ENCODE measurements at regions of chr7 and their contacts with region 1.

Region 1: GRCh38 chr7:114026486-114027089 is 107.8 kb upstream of the PPP1R3A start:
- DNase-seq: no peak
- ATAC-seq: peak; percentile 49
- H3K4me3 Mint-ChIP-seq: no peak overlapping the region
- H3K27ac Mint-ChIP-seq: no peak overlapping the region
- H3K4me1 Mint-ChIP-seq: no peaks in the 10 kb centered on the region
- H3K27me3 Mint-ChIP-seq: no peaks in the 10 kb centered on the region
- CTCF ChIP-seq: no peak

Region 2: DNA sequence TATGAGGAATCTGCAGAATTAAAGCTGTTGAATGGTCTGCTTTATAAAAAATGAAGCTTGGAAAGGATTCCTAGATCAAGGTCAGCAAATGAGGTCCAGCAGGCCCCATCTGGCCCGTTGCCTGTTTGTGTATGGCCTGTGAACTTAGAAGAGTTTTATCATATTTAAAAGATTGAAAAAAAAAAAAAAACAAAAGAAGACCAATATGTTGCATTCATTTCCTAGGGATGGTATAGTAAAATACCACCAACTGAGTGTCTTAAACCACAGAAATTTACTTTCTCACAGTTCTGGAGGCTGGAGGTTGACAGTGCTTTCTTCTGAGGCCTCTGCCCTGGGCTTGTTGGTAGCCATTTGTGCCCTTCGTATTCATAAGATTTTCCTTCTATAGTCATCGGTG is 217.0 kb before region 1 on chr7:
- CTCF ChIA-PET with region 1: no interaction called
- POLR2A ChIA-PET with region 1: no interaction called
- intact Hi-C with region 1: no loop called
- DNase-seq: no peak
- ATAC-seq: no peak
- H3K4me3 Mint-ChIP-seq: no peak overlapping the region
- H3K27ac Mint-ChIP-seq: no peak overlapping the region
- H3K4me1 Mint-ChIP-seq: no peaks in the 10 kb centered on the region
- H3K27me3 Mint-ChIP-seq: no peaks in the 10 kb centered on the region
- CTCF ChIP-seq: no peak

Region 3: GRCh38 chr7:113986209-113986608 is 40.4 kb before region 1 on chr7:
- CTCF ChIA-PET with region 1: no interaction called
- POLR2A ChIA-PET with region 1: no interaction called
- intact Hi-C with region 1: no loop called
- DNase-seq: no peak
- ATAC-seq: no peak
- H3K4me3 Mint-ChIP-seq: no peak overlapping the region
- H3K27ac Mint-ChIP-seq: no peak overlapping the region
- H3K4me1 Mint-ChIP-seq: no peaks in the 10 kb centered on the region
- H3K27me3 Mint-ChIP-seq: no peaks in the 10 kb centered on the region
- CTCF ChIP-seq: no peak

Region 4: GRCh38 chr7:114070244-114070643 is 43.7 kb after region 1 on chr7:
- CTCF ChIA-PET with region 1: no interaction called
- POLR2A ChIA-PET with region 1: no interaction called
- intact Hi-C with region 1: no loop called
- DNase-seq: no peak
- ATAC-seq: no peak
- H3K4me3 Mint-ChIP-seq: no peak overlapping the region
- H3K27ac Mint-ChIP-seq: no peak overlapping the region
- H3K4me1 Mint-ChIP-seq: no peaks in the 10 kb centered on the region
- H3K27me3 Mint-ChIP-seq: peaks cover 7% of the 10 kb centered on the region
- CTCF ChIP-seq: no peak

Region 5: DNA sequence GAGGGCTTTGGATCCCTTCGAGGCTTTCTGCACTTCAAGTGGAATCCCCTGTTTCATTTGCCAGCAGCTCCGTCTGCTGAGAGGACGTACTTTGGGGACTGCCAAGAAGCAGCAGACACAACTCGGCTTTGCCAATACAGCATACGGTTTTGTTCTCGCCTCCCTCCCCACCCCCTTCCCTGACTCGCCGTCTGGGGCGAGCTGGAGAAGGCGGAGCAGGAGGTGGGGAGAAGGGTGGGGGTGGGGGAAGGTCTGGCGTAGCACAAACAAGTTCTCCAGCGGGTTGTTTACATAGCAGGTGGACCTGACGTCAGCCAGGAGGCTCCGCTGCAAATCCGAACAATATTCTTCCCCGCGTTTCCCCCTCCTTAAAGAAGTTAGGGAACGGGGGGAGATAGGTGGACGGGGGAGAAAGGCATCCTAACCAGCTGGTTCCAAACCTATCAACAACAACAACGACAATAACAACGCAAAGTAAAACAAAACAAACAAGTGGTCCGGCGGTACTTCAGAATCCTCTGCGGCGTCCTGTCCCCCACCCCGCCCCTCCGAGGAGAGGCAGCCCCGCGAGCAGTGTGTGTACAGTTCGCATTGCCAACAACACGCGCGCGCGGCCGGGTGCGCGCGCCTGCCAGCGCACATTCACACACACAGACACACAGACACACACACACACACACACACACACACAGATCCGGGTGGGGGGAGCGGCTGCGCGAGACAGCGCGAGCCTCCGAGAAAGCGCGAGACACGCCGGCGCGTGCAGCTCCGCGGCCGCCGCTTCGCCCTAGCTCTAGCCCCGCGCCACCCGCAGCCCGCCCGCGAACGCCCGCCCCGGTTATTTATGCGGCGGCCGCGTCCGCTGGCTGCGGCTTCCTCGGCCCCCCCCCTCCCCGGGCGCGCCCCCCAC is 59.3 kb after region 1 on chr7:
- CTCF ChIA-PET with region 1: no interaction called
- POLR2A ChIA-PET with region 1: no interaction called
- intact Hi-C with region 1: loop called (anchors 2 kb)
- DNase-seq: no peak
- ATAC-seq: peak; percentile 52
- H3K4me3 Mint-ChIP-seq: peak overlapping the region; percentile 89
- H3K27ac Mint-ChIP-seq: no peak overlapping the region
- H3K4me1 Mint-ChIP-seq: peaks cover 53% of the 10 kb centered on the region
- H3K27me3 Mint-ChIP-seq: peaks cover 61% of the 10 kb centered on the region
- CTCF ChIP-seq: no peak

Region 6: DNA sequence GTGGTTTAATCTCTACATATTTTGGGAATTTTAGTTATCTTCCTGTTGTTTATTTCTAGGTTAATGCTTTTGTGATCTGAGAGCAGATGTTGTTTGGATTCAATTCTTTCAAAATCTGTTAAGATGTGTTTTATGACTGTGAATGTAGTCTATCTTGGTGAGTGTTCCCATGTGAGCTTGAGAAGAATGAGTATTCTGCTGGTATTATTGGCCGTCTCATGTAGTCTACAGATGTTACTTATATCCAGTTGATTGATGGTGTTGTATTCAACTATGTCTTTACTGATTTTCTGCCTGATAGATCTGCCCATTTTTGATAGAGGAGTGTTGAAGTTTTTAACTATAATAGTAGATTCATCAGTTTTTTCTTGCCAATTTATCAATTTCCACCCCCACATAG is 246.6 kb after region 1 on chr7:
- CTCF ChIA-PET with region 1: no interaction called
- POLR2A ChIA-PET with region 1: no interaction called
- intact Hi-C with region 1: no loop called
- DNase-seq: no peak
- ATAC-seq: no peak
- H3K4me3 Mint-ChIP-seq: no peak overlapping the region
- H3K27ac Mint-ChIP-seq: no peak overlapping the region
- H3K4me1 Mint-ChIP-seq: no peaks in the 10 kb centered on the region
- H3K27me3 Mint-ChIP-seq: no peaks in the 10 kb centered on the region
- CTCF ChIP-seq: no peak

Region 7: GRCh38 chr7:114405427-114405826 is 378.8 kb after region 1 on chr7:
- CTCF ChIA-PET with region 1: interaction called, 3 read pairs
- POLR2A ChIA-PET with region 1: no interaction called
- intact Hi-C with region 1: loop called (anchors 2 kb)
- DNase-seq: no peak
- ATAC-seq: no peak
- H3K4me3 Mint-ChIP-seq: no peak overlapping the region
- H3K27ac Mint-ChIP-seq: no peak overlapping the region
- H3K4me1 Mint-ChIP-seq: no peaks in the 10 kb centered on the region
- H3K27me3 Mint-ChIP-seq: no peaks in the 10 kb centered on the region
- CTCF ChIP-seq: no peak

Region 8: GRCh38 chr7:115217373-115217772 is 1190.8 kb after region 1 on chr7:
- CTCF ChIA-PET with region 1: interaction called, 3 read pairs
- POLR2A ChIA-PET with region 1: no interaction called
- intact Hi-C with region 1: loop called (anchors 1 kb)
- DNase-seq: no peak
- ATAC-seq: no peak
- H3K4me3 Mint-ChIP-seq: no peak overlapping the region
- H3K27ac Mint-ChIP-seq: no peak overlapping the region
- H3K4me1 Mint-ChIP-seq: no peaks in the 10 kb centered on the region
- H3K27me3 Mint-ChIP-seq: peaks cover 8% of the 10 kb centered on the region
- CTCF ChIP-seq: no peak

Region 9: GRCh38 chr7:115707258-115708012 is 1680.8 kb after region 1 on chr7:
- CTCF ChIA-PET with region 1: no interaction called
- POLR2A ChIA-PET with region 1: no interaction called
- intact Hi-C with region 1: loop called (anchors 2 kb)
- DNase-seq: no peak
- ATAC-seq: no peak
- H3K4me3 Mint-ChIP-seq: no peak overlapping the region
- H3K27ac Mint-ChIP-seq: no peak overlapping the region
- H3K4me1 Mint-ChIP-seq: no peaks in the 10 kb centered on the region
- H3K27me3 Mint-ChIP-seq: no peaks in the 10 kb centered on the region
- CTCF ChIP-seq: no peak

Region 10: GRCh38 chr7:115851291-115851690 is 1824.7 kb after region 1 on chr7:
- CTCF ChIA-PET with region 1: interaction called, 13 read pairs
- POLR2A ChIA-PET with region 1: no interaction called
- intact Hi-C with region 1: loop called (anchors 1 kb)
- DNase-seq: no peak
- ATAC-seq: no peak
- H3K4me3 Mint-ChIP-seq: no peak overlapping the region
- H3K27ac Mint-ChIP-seq: no peak overlapping the region
- H3K4me1 Mint-ChIP-seq: no peaks in the 10 kb centered on the region
- H3K27me3 Mint-ChIP-seq: peaks cover 3% of the 10 kb centered on the region
- CTCF ChIP-seq: no peak

Measured in activated B cell treated with CpG ODN at 0.5 μM for 24 hours (primary cell).